Mammary epithelial cell (primary cell): ENCODE measurements at regions of chr1 and their contacts with region 1.

Region 1: GRCh38 chr1:55021965-55022546 is 17.3 kb upstream of the PCSK9 start:
- DNase-seq: peak; percentile 88
- H3K4me3 ChIP-seq: no peak overlapping the region
- H3K27ac ChIP-seq: no peak overlapping the region
- H3K4me1 ChIP-seq: no peaks in the 10 kb centered on the region
- H3K27me3 ChIP-seq: no peaks in the 10 kb centered on the region
- CTCF ChIP-seq: peak; percentile 86 to 97

Region 2: GRCh38 chr1:54934869-54935268 is 87.2 kb before region 1 on chr1:
- CTCF ChIA-PET with region 1: no interaction called
- dilution Hi-C with region 1: loop called (anchors 5 kb)
- in situ Hi-C with region 1: no loop called
- intact Hi-C with region 1: no loop called
- DNase-seq: peak; percentile 58
- H3K4me3 ChIP-seq: no peak overlapping the region
- H3K27ac ChIP-seq: no peak overlapping the region
- H3K4me1 ChIP-seq: peaks cover 13% of the 10 kb centered on the region
- H3K27me3 ChIP-seq: no peaks in the 10 kb centered on the region
- CTCF ChIP-seq: no peak

Region 3: GRCh38 chr1:54950369-54951163 is 71.5 kb before region 1 on chr1:
- CTCF ChIA-PET with region 1: interaction called, 49 read pairs
- dilution Hi-C with region 1: no loop called
- in situ Hi-C with region 1: no loop called
- intact Hi-C with region 1: loop called (anchors 1 kb)
- DNase-seq: peak; percentile 71
- H3K4me3 ChIP-seq: peak overlapping the region in 1 of 3 experiments; percentile 10
- H3K27ac ChIP-seq: no peak overlapping the region
- H3K4me1 ChIP-seq: peaks cover 31% of the 10 kb centered on the region
- H3K27me3 ChIP-seq: no peaks in the 10 kb centered on the region
- CTCF ChIP-seq: peak; percentile 60 to 76

Region 4: DNA sequence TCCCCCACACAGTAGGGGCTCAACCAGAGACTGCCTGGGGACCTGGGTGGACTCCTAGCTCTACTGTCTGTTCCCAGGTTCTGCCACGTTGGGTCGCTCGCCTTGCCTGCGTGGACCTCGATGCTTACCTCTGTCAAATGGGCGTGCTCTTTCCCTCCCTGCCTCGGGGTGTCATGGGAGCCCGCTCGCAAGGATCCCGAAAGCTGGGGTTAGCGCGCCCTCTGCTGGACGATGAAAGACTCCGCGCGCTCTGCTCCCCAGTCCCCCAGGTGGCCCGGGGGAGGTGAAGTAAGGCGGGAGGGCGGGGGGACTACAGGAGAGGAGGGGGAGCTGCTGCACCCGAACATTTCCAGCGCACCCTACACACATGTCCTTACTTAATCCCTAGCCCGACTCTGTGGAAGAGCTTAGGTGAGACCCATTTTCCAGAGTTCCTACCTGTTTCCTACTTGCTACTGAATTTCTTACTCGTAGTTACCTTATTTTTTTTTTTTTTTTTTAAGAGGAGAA is 25.6 kb before region 1 on chr1:
- CTCF ChIA-PET with region 1: interaction called, 4 read pairs
- dilution Hi-C with region 1: no loop called
- in situ Hi-C with region 1: no loop called
- intact Hi-C with region 1: loop called (anchors 1 kb)
- DNase-seq: peak; percentile 47
- H3K4me3 ChIP-seq: no peak overlapping the region
- H3K27ac ChIP-seq: no peak overlapping the region
- H3K4me1 ChIP-seq: peaks cover 5% of the 10 kb centered on the region
- H3K27me3 ChIP-seq: no peaks in the 10 kb centered on the region
- CTCF ChIP-seq: peak; percentile 59 to 88